ENCODE measurements at regions of chr2 and their contacts with region 1.

Region 1: DNA sequence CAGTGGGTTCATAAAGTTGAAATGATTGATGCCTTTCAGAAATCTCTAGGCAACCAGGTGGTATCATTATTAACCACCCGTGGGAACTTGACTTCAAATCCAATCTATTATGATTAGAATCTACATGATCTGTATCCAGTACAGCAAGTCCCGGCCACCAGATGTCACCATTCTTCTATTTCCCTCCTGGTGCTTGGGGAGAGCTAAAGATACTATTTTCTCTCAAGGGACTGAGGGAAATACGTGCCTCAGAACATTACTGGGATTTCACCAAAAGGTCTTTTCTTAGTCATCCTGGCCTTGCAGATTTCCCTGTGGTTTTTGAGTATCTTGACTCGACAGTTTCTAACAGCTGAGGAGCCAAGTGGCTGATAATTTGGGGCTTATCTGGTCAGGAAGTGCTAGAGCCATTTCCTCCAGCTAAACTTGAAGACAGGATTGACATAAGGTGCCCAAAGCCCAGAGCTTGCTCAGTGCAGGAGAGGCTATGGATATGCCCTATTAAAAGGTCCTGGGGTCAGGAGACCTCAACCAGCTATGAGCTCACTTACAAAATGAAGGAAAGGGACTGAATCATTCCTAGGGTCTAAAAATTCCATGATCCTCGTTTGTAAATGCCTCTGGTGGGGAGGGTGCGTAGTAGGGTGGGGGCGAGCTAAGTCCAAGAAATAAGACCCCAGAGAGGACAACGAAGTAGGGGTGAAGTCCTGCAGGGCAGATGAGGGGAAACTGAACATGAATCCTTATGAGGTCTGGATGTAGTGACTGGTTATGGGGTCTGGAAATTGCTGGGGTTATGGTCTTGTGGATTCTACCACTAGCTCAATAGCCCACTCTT is 135.4 kb upstream of the MGAT5 start:
- DNase-seq: peak; percentile 81 to 89
- H3K4me3 ChIP-seq: no peak overlapping the region
- H3K4me3 Mint-ChIP-seq: peak overlapping the region; percentile 74
- H3K27ac Mint-ChIP-seq: no peak overlapping the region
- H3K4me1 ChIP-seq: peaks cover under 1% of the 10 kb centered on the region; the same call in 1 of the 2 replicates
- H3K4me1 Mint-ChIP-seq: peaks cover 12% of the 10 kb centered on the region
- H3K27me3 ChIP-seq: no peaks in the 10 kb centered on the region
- H3K27me3 Mint-ChIP-seq: no peaks in the 10 kb centered on the region
- CTCF ChIP-seq: peak; percentile 60 to 84

Region 2: DNA sequence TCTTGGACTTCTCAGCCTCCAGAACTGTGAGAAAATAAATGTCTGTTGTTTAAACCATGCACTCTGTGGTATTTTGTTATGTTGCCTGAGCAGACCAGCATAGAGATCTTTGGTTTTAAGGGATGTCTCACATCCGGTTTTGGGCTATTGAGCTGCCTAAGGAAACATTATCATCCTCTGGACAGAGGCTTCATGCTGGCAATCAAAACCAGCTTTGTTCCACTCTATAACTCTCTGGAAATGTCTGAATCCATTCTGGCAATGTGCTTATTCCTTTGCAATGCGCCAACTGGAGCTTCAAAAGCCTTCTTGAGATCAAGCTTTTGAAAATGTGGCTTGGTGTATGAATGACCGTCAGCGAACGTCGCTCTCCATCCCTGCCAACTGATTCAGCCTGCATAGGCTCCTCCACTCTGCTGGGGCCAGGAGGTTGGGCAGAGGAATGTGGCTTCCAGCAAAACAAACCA is 48.2 kb before region 1 on chr2:
- CTCF ChIA-PET with region 1: no interaction called
- POLR2A ChIA-PET with region 1: no interaction called
- intact Hi-C with region 1: no loop called
- DNase-seq: no peak
- H3K4me3 ChIP-seq: no peak overlapping the region
- H3K4me3 Mint-ChIP-seq: no peak overlapping the region
- H3K27ac Mint-ChIP-seq: no peak overlapping the region
- H3K4me1 ChIP-seq: no peaks in the 10 kb centered on the region
- H3K4me1 Mint-ChIP-seq: no peaks in the 10 kb centered on the region
- H3K27me3 ChIP-seq: no peaks in the 10 kb centered on the region
- H3K27me3 Mint-ChIP-seq: no peaks in the 10 kb centered on the region
- CTCF ChIP-seq: no peak

Region 3: DNA sequence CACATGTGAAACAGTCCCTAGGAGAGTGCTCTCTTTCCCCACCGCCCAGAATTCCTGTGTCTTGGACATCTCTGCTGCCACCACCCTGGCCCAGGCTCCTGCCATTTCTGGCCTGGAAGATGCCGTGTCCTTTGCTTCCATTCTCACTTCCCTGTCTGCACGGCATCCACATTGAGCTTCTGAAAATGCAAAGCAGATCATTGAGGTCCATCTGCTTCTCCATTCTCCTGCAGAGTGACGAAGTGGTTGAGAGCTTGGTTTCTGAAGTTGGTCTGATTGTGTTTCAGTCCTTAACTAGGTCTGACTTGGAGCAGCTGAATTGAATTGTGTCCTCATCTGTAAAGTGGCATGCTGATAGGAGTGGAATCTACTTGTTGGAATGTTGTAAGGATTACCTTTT is 36.6 kb after region 1 on chr2:
- CTCF ChIA-PET with region 1: no interaction called
- POLR2A ChIA-PET with region 1: no interaction called
- intact Hi-C with region 1: no loop called
- DNase-seq: no peak
- H3K4me3 ChIP-seq: no peak overlapping the region
- H3K4me3 Mint-ChIP-seq: no peak overlapping the region
- H3K27ac Mint-ChIP-seq: no peak overlapping the region
- H3K4me1 ChIP-seq: no peaks in the 10 kb centered on the region
- H3K4me1 Mint-ChIP-seq: no peaks in the 10 kb centered on the region
- H3K27me3 ChIP-seq: no peaks in the 10 kb centered on the region
- H3K27me3 Mint-ChIP-seq: no peaks in the 10 kb centered on the region
- CTCF ChIP-seq: no peak

Region 4: DNA sequence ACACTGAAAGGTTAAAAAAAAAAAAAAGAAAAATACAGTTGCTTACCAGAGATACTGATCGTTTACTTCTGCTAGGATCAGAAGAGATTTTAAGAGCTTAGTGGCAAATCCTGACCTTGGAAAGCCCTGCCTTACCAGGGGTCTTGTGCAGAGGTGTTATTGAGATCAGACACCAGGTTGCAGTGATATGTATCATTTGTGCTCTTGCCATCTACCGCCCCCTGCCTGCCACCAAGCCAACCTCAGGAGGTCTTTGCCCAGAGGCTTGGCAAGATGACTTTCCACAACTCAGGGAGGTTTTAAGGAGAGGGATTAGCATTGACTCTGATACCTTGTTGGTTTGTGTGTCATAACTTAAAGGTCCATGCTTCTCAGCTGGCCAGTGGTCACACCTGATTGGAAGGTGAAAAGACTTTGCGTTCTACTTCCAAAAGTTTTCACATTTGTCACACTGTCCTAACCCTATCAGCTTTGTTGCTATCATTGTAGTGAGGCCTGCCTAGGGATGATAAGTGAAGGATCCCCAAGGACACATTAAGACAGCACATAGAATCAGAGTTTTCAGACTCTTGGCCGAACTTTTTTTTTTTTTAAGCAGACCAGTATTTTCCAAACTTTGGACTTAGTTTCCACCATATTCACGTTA is 89.2 kb after region 1 on chr2:
- CTCF ChIA-PET with region 1: interaction called, 13 read pairs
- POLR2A ChIA-PET with region 1: no interaction called
- intact Hi-C with region 1: loop called (anchors 5 kb)
- DNase-seq: peak; percentile 42 to 62
- H3K4me3 ChIP-seq: no peak overlapping the region
- H3K4me3 Mint-ChIP-seq: no peak overlapping the region
- H3K27ac Mint-ChIP-seq: no peak overlapping the region
- H3K4me1 ChIP-seq: peaks cover 2% of the 10 kb centered on the region; the same call in 1 of the 2 replicates
- H3K4me1 Mint-ChIP-seq: no peaks in the 10 kb centered on the region
- H3K27me3 ChIP-seq: no peaks in the 10 kb centered on the region
- H3K27me3 Mint-ChIP-seq: no peaks in the 10 kb centered on the region
- CTCF ChIP-seq: peak; percentile 67 to 78

Region 5: GRCh38 chr2:134228493-134228903 is 110.0 kb after region 1 on chr2:
- CTCF ChIA-PET with region 1: interaction called, 8 read pairs
- POLR2A ChIA-PET with region 1: no interaction called
- intact Hi-C with region 1: loop called (anchors 1 kb)
- DNase-seq: peak; percentile 36 to 53
- H3K4me3 ChIP-seq: no peak overlapping the region
- H3K4me3 Mint-ChIP-seq: no peak overlapping the region
- H3K27ac Mint-ChIP-seq: no peak overlapping the region
- H3K4me1 ChIP-seq: no peaks in the 10 kb centered on the region
- H3K4me1 Mint-ChIP-seq: no peaks in the 10 kb centered on the region
- H3K27me3 ChIP-seq: no peaks in the 10 kb centered on the region
- H3K27me3 Mint-ChIP-seq: no peaks in the 10 kb centered on the region
- CTCF ChIP-seq: peak; percentile 60 to 64

Region 6: DNA sequence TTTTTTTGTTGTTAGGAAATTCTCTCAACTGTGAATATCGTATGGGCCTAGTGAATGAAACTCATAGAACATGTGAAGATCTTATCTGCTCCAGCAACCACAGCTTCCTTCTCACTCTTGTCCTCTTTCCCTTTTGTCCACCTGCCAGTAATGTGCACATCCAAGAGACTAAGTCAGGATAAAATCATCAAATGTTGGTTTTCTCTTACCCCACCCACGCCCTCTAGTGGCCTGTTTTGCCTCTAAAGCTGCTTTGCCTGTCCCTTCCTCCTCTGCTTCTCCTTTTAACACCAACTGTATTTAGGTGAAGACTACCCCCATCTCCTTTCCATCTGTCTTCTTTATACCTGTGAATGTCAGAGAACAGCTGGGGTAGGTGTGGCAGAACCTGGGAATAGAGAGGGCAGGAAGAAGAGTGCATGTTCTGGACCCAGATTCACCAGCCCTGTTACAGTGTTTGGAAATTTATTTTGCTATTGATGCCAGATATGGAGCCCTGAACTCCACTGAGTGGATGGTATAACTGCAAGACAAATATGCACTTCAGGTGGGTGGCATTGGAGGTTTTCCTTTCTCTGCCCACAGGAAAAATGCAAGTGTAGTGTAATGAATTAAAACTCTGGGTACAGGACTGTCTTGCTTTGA is 127.0 kb after region 1 on chr2:
- CTCF ChIA-PET with region 1: interaction called, 22 read pairs
- POLR2A ChIA-PET with region 1: no interaction called
- intact Hi-C with region 1: loop called (anchors 1 kb)
- DNase-seq: peak; percentile 68 to 81
- H3K4me3 ChIP-seq: no peak overlapping the region
- H3K4me3 Mint-ChIP-seq: no peak overlapping the region
- H3K27ac Mint-ChIP-seq: no peak overlapping the region
- H3K4me1 ChIP-seq: no peaks in the 10 kb centered on the region
- H3K4me1 Mint-ChIP-seq: peaks cover 7% of the 10 kb centered on the region
- H3K27me3 ChIP-seq: no peaks in the 10 kb centered on the region
- H3K27me3 Mint-ChIP-seq: no peaks in the 10 kb centered on the region
- CTCF ChIP-seq: peak; percentile 78 to 85

Region 7: GRCh38 chr2:134411828-134412638 is 293.5 kb after region 1 on chr2:
- CTCF ChIA-PET with region 1: interaction called, 34 read pairs
- POLR2A ChIA-PET with region 1: no interaction called
- intact Hi-C with region 1: loop called (anchors 1 kb)
- DNase-seq: peak; percentile 76 to 84
- H3K4me3 ChIP-seq: no peak overlapping the region
- H3K4me3 Mint-ChIP-seq: no peak overlapping the region
- H3K27ac Mint-ChIP-seq: no peak overlapping the region
- H3K4me1 ChIP-seq: peaks cover 7% of the 10 kb centered on the region
- H3K4me1 Mint-ChIP-seq: peaks cover 12% of the 10 kb centered on the region
- H3K27me3 ChIP-seq: no peaks in the 10 kb centered on the region
- H3K27me3 Mint-ChIP-seq: no peaks in the 10 kb centered on the region
- CTCF ChIP-seq: peak; percentile 75 to 79

Region 8: GRCh38 chr2:134431838-134432434 is 313.4 kb after region 1 on chr2:
- CTCF ChIA-PET with region 1: no interaction called
- POLR2A ChIA-PET with region 1: no interaction called
- intact Hi-C with region 1: loop called (anchors 1 kb)
- DNase-seq: no peak
- H3K4me3 ChIP-seq: no peak overlapping the region
- H3K4me3 Mint-ChIP-seq: peak overlapping the region; percentile 42
- H3K27ac Mint-ChIP-seq: peak overlapping the region; percentile 78
- H3K4me1 ChIP-seq: peaks cover 31% of the 10 kb centered on the region
- H3K4me1 Mint-ChIP-seq: peaks cover 48% of the 10 kb centered on the region
- H3K27me3 ChIP-seq: no peaks in the 10 kb centered on the region
- H3K27me3 Mint-ChIP-seq: no peaks in the 10 kb centered on the region
- CTCF ChIP-seq: no peak

Measured in Caco-2 (cell line).